Aorta (tissue), 5 donors: ENCODE measurements at regions of chr10 and their contacts with region 1.

Region 1: GRCh38 chr10:69318106-69318866 is 40.0 kb downstream of the HK1 start:
- DNase-seq: peak; percentile 95 to 97
- ATAC-seq: peak; percentile 95
- H3K4me3 ChIP-seq: peak overlapping the region; percentile 57 to 73
- H3K27ac ChIP-seq: peak overlapping the region; percentile 10 to 97
- H3K4me1 ChIP-seq: peaks cover 0 to 8% of the 10 kb centered on the region in 2 donors
- H3K27me3 ChIP-seq: no peaks in the 10 kb centered on the region

Region 2: GRCh38 chr10:69262292-69262751 is 56.0 kb before region 1 on chr10:
- intact Hi-C with region 1: no loop called
- DNase-seq: no peak
- ATAC-seq: no peak
- H3K4me3 ChIP-seq: no peak overlapping the region
- H3K27ac ChIP-seq: no peak overlapping the region
- H3K4me1 ChIP-seq: no peaks in the 10 kb centered on the region
- H3K27me3 ChIP-seq: no peaks in the 10 kb centered on the region

Region 3: DNA sequence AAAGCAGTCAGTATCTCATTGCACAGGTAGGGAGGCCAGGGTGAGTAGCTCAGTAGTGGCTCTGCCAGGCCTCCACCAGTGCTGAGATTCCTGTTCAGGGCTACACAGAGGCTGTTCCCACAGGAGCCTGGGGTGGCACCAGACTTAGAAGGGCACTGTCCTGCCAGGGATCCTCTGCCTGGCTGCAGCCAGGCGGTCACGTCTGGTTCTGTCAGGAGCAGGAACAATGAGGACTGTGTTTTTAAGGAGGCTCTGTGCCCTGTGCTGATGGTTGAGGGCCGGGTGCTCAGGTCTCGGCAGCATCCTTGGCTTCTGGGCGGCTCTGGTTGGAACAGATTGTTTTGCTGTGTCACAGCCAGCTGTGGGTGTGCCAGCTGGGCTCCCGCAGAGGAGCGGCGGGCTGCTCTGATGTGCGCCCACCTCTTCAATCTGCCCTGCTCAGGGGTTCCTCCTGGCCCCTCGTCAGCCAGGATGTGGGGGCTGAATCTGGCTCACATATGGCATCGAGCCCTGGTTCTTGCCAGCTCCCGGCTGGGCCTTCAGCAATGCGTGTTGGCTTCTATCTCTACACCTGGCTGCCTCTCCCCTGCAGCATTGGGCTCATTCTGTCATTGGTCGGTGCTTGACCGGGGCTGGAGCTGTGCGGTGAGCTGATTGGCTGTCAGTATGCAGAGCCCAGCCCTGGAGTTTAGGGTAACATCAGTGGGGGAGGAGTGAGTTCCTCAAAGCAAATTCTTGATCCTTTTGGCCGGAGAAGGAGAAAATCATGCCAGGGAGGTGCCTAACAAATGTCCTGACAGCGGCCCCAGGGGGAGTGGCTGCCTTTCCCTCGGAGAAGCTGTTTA is 57.2 kb after region 1 on chr10:
- intact Hi-C with region 1: loop called in 1 of 2 experiments (anchors 5 kb)
- DNase-seq: peak in 1 of 2 donors; percentile 64
- ATAC-seq: peak; percentile 81
- H3K4me3 ChIP-seq: no peak overlapping the region
- H3K27ac ChIP-seq: peak overlapping the region in 1 of 2 donors; percentile 46
- H3K4me1 ChIP-seq: no peaks in the 10 kb centered on the region
- H3K27me3 ChIP-seq: no peaks in the 10 kb centered on the region

Region 4: DNA sequence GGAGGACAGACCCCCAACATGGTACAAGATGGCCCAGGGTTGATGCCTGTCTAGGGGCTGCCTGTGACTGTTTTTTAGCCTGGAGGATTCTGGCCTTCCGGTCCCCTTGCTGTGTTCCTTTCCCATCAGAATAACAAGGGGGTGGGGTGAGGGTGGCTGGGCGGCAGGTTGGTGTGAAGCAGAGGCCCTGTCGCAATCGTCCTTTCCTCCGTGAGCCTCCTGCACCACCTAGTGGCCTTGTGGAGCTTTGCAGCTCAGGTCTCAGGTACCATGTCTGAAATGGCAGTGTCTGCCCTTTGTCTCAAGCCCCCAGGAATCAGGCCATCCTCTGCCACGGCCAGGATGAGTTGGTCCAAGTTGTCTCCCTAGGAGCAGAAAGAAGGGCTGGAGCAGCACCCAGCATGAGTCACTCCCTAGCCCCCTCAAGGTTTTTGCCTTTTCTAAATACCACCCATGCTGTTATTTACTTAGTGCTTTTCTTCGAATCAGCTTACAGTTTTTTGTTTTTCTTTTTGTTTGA is 74.3 kb after region 1 on chr10:
- intact Hi-C with region 1: loop called (anchors 2 to 5 kb)
- DNase-seq: peak; percentile 89 to 93
- ATAC-seq: peak; percentile 95
- H3K4me3 ChIP-seq: no peak overlapping the region
- H3K27ac ChIP-seq: no peak overlapping the region
- H3K4me1 ChIP-seq: no peaks in the 10 kb centered on the region
- H3K27me3 ChIP-seq: no peaks in the 10 kb centered on the region

Region 5: GRCh38 chr10:69819716-69820506 is 501.6 kb after region 1 on chr10:
- intact Hi-C with region 1: no loop called
- DNase-seq: no peak
- ATAC-seq: no peak
- H3K4me3 ChIP-seq: no peak overlapping the region
- H3K27ac ChIP-seq: no peak overlapping the region
- H3K4me1 ChIP-seq: no peaks in the 10 kb centered on the region
- H3K27me3 ChIP-seq: no peaks in the 10 kb centered on the region